CD4-positive, alpha-beta memory T cell (primary cell): ENCODE measurements at regions of chr1 and their contacts with region 1.

Region 1: DNA sequence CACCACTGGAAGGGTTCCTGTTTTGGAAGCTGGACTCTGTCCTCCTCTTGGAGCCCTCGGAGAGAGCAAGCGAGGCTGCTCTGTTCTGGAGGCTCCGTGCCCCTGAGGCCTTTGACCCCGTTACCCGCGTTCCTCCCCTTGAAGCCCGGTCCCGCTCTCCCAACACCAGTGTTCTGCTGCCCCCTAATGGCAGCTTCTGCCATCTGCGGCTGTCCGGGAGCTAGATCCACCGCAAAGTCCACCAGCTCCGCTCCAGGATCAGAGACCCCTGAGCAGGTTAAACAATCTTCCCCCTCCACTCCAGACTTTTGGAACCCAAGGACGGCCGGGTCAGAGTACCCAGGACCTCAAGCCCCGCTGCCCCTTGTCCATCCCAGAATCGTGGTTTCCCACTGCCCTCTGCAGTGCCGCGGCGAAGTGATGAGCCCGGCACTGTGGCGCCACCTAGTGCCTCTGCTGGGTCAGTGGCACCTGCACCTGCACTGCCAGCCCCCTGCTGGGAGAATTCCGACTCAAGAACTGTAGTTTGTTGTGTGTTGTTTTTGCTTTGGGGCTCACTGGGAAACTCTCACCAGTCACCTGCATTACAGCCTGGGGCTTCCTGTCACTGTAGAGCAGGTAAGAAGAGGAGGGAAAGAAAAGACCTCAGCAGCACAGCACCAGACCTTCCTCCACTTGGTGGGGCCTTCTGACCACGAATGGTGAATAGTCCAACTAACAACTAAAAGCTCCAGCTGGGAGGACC is 63.5 kb upstream of the NFASC start:
- DNase-seq: peak; percentile 79 to 88 (median 85)
- H3K4me3 ChIP-seq: peak overlapping the region in 1 of 2 donors; percentile 47
- H3K4me3 Mint-ChIP-seq: peak overlapping the region; percentile 82 to 95 (median 92)
- H3K27ac ChIP-seq: no peak overlapping the region
- H3K27ac Mint-ChIP-seq: peak overlapping the region; percentile 1 to 93 (median 62)
- H3K4me1 ChIP-seq: no peaks in the 10 kb centered on the region
- H3K4me1 Mint-ChIP-seq: peaks cover 0 to 6% (median 4%) of the 10 kb centered on the region in 4 donors
- H3K27me3 ChIP-seq: no peaks in the 10 kb centered on the region
- H3K27me3 Mint-ChIP-seq: no peaks in the 10 kb centered on the region

Region 2: DNA sequence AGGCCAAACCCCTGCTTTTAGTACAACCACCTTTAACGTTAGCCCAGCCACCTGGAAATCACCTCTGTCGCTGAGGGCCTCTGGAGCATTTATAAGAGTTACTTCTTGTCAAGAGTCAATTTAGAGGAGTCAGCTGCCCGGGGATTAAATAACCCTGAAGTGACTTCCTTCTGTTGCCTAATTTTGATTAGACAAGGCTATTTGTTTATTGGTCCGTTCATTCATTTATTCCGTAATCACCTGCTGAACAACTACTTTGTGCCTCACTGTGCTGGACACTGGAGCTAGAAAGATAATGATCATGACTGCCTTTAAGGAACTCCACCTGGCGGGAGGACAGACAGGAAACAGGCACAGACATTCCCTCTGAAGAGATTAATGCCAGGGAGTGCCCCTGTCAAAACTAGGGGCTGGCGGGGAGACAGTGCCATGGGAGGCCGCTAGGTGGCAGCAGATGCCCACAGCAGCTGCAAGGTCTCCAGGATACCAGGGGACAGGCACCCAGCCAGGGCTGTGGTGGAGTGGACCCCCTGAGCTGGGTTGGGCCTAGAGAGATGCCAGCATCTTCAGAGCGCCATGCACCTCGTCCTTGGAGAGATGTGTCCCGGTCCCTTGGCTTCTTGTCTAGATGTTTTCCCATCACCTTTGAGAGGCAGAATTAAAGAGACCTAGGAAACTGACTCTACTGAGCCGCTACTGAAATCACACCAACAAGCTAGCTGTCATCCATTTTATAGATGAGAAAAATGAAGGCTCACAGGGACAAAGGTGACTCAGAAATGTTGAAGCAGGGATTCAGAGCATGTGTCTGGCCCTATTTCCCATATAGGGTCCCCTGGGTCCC is 644.7 kb before region 1 on chr1:
- CTCF ChIA-PET with region 1: interaction called, 3 read pairs
- POLR2A ChIA-PET with region 1: no interaction called
- intact Hi-C with region 1: loop called (anchors 5 kb)
- DNase-seq: peak; percentile 65 to 76 (median 68)
- H3K4me3 ChIP-seq: no peak overlapping the region
- H3K4me3 Mint-ChIP-seq: no peak overlapping the region
- H3K27ac ChIP-seq: no peak overlapping the region
- H3K27ac Mint-ChIP-seq: no peak overlapping the region
- H3K4me1 ChIP-seq: no peaks in the 10 kb centered on the region
- H3K4me1 Mint-ChIP-seq: no peaks in the 10 kb centered on the region
- H3K27me3 ChIP-seq: no peaks in the 10 kb centered on the region
- H3K27me3 Mint-ChIP-seq: peaks cover 2 to 4% of the 10 kb centered on the region in 2 donors

Region 3: DNA sequence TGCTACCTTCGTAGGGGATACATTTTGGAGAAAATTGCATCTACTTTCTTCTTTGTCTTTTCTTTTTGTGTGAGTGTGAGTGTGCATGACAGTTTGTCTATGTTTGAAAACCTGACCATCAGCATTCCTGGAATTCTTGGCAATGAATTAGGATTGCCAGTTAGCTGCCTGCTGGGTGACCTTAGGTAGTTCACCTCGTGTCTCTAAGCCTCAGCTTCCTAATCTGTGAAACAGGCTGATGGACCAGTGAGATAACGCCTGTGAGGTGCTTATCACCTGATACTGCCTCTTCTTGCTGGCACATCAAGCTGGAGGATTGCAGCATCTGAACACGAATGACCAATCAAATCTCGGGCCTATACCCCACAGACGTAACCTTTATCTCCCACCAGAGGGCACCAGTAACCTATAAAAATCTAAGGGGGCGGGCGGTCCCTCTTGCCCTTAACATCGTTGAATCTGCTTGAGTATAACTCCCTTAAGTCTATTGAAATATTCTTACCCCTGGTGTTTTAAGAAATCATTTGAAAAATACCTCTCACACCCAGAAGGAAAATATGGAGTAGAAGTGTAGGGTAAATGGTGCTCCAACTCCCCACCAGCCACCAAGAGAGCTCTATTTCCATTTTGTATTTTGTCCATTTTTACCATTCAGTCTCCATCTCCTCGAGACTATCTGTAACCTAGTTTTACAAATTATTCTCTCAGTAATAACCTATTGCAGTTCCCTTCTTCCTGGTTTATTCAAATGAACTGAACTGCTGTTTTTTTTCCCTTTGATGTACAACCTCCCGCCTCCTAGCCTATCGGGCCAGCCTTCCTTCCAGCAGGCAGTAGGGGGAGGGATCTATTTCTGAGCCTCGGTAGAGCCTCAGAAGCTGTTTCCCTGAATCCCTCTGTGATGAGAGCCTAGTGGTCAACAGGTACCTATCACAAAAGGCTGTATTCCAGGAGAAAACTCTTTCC is 241.2 kb before region 1 on chr1:
- CTCF ChIA-PET with region 1: interaction called, 50 read pairs
- POLR2A ChIA-PET with region 1: interaction called, 3 read pairs
- intact Hi-C with region 1: loop called (anchors 1 kb)
- DNase-seq: peak; percentile 68 to 80 (median 70)
- H3K4me3 ChIP-seq: no peak overlapping the region
- H3K4me3 Mint-ChIP-seq: peak overlapping the region in 4 of 8 donors; percentile 14 to 47 (median 32)
- H3K27ac ChIP-seq: no peak overlapping the region
- H3K27ac Mint-ChIP-seq: peak overlapping the region; percentile 68 to 93 (median 79)
- H3K4me1 ChIP-seq: peaks cover 36% of the 10 kb centered on the region
- H3K4me1 Mint-ChIP-seq: peaks cover 32 to 49% (median 39%) of the 10 kb centered on the region in 4 donors
- H3K27me3 ChIP-seq: no peaks in the 10 kb centered on the region
- H3K27me3 Mint-ChIP-seq: no peaks in the 10 kb centered on the region

Region 4: DNA sequence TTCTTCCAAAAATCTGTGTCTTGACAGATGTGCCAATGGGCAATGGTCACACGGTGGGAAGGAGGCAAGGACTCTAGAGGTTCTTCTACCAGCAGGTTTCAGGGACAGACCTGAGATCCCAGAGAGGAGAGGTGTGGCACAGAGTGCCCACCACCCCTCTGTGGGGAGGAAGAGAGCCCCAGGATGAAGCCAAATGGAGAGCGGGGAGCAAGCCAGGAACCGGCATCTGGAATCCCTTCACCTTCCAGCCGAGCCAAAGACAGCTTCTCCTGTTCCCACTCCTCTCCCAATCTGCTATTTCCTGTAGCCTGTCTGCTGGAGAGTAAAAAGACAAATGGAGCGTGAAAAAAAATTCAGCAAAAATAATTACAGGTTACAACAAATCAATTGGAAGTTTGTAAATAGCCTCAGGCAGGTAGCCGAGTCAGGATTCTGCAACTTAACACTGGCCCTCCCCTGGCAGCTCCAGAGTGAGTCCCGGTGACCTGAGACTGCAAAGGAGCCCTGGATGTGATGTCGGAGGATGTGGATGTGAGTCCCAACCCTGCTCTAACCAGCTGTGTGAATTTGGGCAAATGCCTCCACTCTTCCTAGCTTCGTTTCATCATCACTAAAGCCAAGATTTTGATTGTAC is 76.2 kb before region 1 on chr1:
- CTCF ChIA-PET with region 1: no interaction called
- POLR2A ChIA-PET with region 1: no interaction called
- intact Hi-C with region 1: no loop called
- DNase-seq: no peak
- H3K4me3 ChIP-seq: no peak overlapping the region
- H3K4me3 Mint-ChIP-seq: no peak overlapping the region
- H3K27ac ChIP-seq: no peak overlapping the region
- H3K27ac Mint-ChIP-seq: no peak overlapping the region
- H3K4me1 ChIP-seq: no peaks in the 10 kb centered on the region
- H3K4me1 Mint-ChIP-seq: no peaks in the 10 kb centered on the region
- H3K27me3 ChIP-seq: no peaks in the 10 kb centered on the region
- H3K27me3 Mint-ChIP-seq: peaks cover 3 to 21% of the 10 kb centered on the region in 2 donors

Region 5: DNA sequence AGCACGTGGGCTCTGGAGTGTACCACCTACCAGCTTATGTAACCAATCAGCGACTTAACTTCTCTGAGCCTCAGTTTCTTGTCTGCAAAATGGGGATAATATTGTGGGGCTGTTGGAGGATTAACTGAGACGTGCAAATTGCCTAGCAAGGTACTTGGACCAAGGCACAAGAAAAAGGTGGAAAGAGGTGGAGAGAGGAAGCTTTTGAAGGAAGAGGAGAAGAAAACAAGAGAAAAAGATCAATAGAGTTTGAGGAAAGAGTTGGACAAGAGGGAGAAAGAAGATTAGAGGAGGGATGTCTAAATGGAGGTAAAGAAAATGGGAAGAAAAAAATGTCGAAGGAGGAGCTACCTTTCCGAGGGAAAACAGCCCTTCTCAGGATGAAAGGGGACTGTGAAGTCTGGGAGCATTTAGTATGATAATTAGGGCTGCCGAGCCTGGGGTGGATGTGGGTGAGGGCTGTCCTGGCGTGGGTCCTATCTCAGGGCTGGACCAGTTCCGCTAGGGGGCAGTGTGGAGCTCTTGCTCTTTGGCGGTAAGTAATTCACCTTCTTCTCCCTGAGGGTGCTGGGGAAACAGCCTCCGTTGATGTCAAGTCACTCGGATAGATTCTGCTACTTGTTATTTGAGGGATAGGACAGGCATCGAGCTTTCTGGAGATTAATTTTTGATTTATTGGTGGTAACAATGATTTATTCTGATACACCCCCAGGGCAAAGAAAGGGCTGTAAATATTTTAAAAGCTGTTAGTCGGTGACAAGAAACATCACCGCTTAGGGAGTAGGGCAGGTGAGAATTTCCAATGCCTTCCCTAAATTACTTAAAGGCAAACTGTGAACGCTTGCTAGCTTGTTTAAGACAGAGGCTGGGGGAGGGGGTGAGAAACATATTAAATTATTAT is 15.4 kb before region 1 on chr1:
- CTCF ChIA-PET with region 1: interaction called, 166 read pairs
- POLR2A ChIA-PET with region 1: interaction called, 5 read pairs
- intact Hi-C with region 1: loop called (anchors 1 kb)
- DNase-seq: peak; percentile 67 to 73 (median 69)
- H3K4me3 ChIP-seq: no peak overlapping the region
- H3K4me3 Mint-ChIP-seq: no peak overlapping the region
- H3K27ac ChIP-seq: no peak overlapping the region
- H3K27ac Mint-ChIP-seq: no peak overlapping the region
- H3K4me1 ChIP-seq: no peaks in the 10 kb centered on the region
- H3K4me1 Mint-ChIP-seq: peaks cover 0 to 5% (median 0%) of the 10 kb centered on the region in 4 donors
- H3K27me3 ChIP-seq: peaks cover 4% of the 10 kb centered on the region
- H3K27me3 Mint-ChIP-seq: peaks cover 30 to 32% of the 10 kb centered on the region in 2 donors

Region 6: DNA sequence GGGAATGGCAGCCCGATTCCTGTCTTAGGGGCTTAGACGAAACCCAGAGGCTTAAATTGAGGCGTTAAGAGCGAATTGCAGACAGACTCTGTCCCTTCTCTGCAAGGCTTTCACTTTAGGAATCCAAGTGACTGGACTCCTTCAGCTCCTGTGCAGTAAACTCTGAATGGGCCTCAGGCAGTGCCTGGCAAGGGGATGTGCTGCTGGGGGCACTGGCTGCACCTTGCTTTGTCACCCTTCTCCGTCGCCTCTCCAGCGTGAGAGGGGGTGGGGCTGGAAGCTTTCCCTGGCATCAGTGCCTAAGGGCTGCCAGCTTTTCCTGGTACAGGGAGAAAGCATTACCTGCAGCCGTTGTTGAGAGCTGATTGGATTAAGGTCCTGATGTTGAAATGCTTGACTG is 23.6 kb after region 1 on chr1:
- CTCF ChIA-PET with region 1: interaction called, 13 read pairs
- POLR2A ChIA-PET with region 1: no interaction called
- intact Hi-C with region 1: no loop called
- DNase-seq: no peak
- H3K4me3 ChIP-seq: no peak overlapping the region
- H3K4me3 Mint-ChIP-seq: no peak overlapping the region
- H3K27ac ChIP-seq: no peak overlapping the region
- H3K27ac Mint-ChIP-seq: no peak overlapping the region
- H3K4me1 ChIP-seq: peaks cover 5% of the 10 kb centered on the region
- H3K4me1 Mint-ChIP-seq: peaks cover 2 to 13% (median 6%) of the 10 kb centered on the region in 4 donors
- H3K27me3 ChIP-seq: peaks cover 13% of the 10 kb centered on the region
- H3K27me3 Mint-ChIP-seq: peaks cover 23 to 53% of the 10 kb centered on the region in 2 donors

Region 7: DNA sequence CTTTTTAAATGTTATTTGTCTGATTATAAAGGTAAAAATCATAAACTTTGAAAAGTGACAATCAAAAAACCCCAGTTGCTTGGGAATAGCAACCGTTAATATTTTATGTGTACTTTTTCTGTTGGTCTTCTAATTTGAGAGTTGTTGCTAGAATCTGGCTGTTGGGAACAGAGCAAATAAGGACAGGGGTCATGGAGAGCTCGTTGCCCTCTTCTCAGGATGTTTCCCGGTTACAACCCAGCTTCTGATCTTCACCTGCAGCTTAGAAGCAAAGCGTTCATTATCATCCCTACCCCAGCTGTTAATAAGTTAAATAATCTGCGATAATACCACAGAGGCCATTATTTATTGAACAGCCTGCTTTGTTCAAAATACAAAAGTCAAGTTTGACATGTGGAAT is 41.5 kb after region 1 on chr1:
- CTCF ChIA-PET with region 1: no interaction called
- POLR2A ChIA-PET with region 1: no interaction called
- intact Hi-C with region 1: no loop called
- DNase-seq: no peak
- H3K4me3 ChIP-seq: no peak overlapping the region
- H3K4me3 Mint-ChIP-seq: no peak overlapping the region
- H3K27ac ChIP-seq: no peak overlapping the region
- H3K27ac Mint-ChIP-seq: no peak overlapping the region
- H3K4me1 ChIP-seq: no peaks in the 10 kb centered on the region
- H3K4me1 Mint-ChIP-seq: no peaks in the 10 kb centered on the region
- H3K27me3 ChIP-seq: no peaks in the 10 kb centered on the region
- H3K27me3 Mint-ChIP-seq: peaks cover 7 to 22% of the 10 kb centered on the region in 2 donors

Region 8: DNA sequence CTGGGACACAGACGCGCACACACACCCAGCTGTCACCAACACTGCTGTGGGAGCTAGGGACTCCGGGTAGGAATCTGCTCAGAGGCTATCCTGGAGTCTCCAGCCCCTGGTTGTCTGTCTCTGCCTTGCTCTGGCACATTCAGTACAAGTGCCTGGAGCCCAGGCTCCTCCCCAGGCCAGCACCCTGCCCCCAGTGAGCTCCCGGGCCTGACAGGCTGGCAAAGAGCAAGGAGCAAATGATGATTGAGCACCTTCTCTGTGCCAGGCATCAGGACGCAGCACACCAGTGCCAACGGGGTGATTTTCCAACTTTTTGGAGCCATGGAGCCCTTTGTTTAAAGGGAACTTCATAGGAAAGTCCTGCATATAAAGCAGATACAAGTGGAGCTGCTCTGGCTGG is 242.4 kb after region 1 on chr1:
- CTCF ChIA-PET with region 1: no interaction called
- POLR2A ChIA-PET with region 1: no interaction called
- intact Hi-C with region 1: no loop called
- DNase-seq: no peak
- H3K4me3 ChIP-seq: no peak overlapping the region
- H3K4me3 Mint-ChIP-seq: no peak overlapping the region
- H3K27ac ChIP-seq: no peak overlapping the region
- H3K27ac Mint-ChIP-seq: no peak overlapping the region
- H3K4me1 ChIP-seq: no peaks in the 10 kb centered on the region
- H3K4me1 Mint-ChIP-seq: no peaks in the 10 kb centered on the region
- H3K27me3 ChIP-seq: no peaks in the 10 kb centered on the region
- H3K27me3 Mint-ChIP-seq: peaks cover 5 to 37% of the 10 kb centered on the region in 2 donors